Activated T-helper 1 cell treated with anti-CD3 and anti-CD28 coated beads, Interleukin-12 subunit alpha, Interleukin-12 subunit beta, Interleukin-2, Interleukin-4 antibody, amounts not matched to agents 30 ng/mL and 10 ng/mL and 1 ng/mL, durations not matched to agents 14 hours and 24 hours and 36 hours (primary cell): ENCODE measurements at regions of chr15 and their contacts with region 1.

Region 1: GRCh38 chr15:44711356-44712107 is at the start of gene B2M:
- DNase-seq: peak; percentile 95
- H3K4me3 Mint-ChIP-seq: peak within 1 kb of the TSS; percentile 99
- H3K27ac Mint-ChIP-seq: peak within 1 kb of the TSS; percentile 99
- H3K4me1 Mint-ChIP-seq: peaks cover 49% of the 10 kb centered on the region
- H3K27me3 Mint-ChIP-seq: no peaks in the 10 kb centered on the region
- total RNA-seq, gene B2M: 4,313 and 4,559 TPM in 2 replicates

Region 2: DNA sequence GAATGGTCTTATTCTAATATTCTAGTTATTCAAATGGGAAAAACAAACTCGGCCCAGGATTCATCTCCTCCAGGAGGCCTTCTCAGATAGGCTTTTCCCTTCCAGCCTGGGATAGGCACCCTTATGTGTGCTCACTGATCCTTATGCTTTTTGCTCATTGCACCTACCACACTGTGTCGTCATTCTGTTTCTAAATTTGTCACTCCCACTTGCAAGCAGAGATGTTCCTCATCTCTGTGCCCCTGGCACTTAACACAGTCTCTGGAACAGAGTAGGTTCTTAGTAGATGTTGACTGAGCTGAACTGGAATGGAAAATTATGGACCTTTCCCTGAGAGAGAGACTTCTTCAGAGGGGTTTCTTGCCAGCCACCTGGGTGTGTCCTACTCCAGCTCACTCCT is 29.3 kb before region 1 on chr15:
- intact Hi-C with region 1: loop called (anchors 1 kb)
- DNase-seq: no peak
- H3K4me3 Mint-ChIP-seq: peak overlapping the region; percentile 64
- H3K27ac Mint-ChIP-seq: peak overlapping the region; percentile 89
- H3K4me1 Mint-ChIP-seq: peaks cover 68% of the 10 kb centered on the region
- H3K27me3 Mint-ChIP-seq: no peaks in the 10 kb centered on the region

Region 3: DNA sequence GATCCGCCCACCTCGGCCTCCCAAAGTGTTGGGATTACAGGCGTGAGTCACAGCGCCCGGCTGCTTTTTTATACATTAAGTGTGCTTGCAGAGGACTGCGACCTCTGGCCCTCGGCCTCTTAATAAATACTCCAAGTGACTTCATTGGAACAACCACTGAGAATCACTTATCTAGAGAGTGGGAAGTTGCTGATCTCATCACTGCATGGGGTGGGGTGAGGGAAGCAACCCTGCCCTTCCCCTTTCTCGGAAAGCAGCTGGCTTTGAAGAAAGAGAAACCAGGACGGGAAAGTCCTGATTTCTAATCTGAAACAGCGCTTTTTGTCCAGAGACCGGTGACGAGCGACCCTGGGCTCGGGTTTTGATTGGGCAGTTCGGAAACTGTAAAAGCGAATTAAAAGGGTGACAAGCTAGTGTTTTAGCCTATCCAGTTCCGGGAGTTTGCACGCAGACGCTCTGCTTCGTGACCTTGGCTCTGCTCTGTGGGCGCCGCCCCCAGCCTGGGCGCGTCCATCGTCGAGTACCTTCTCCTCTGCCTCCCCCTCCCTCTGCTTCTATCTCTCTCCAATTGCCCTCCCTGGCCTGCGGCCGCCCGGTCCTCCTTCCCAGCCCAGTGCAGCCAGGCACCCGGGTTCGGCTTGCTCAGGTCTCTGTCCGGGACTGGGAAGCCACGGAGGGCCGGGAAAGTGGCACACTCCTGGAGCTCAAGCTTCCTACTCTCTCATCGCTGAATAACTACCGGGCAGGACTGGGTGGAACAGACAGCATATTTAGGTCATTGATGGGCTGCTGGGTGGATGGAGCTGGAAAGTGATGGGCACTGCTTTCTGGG is 17.3 kb after region 1 on chr15:
- intact Hi-C with region 1: loop called (anchors 1 kb)
- DNase-seq: peak; percentile 96
- H3K4me3 Mint-ChIP-seq: peak overlapping the region; percentile 100
- H3K27ac Mint-ChIP-seq: peak overlapping the region; percentile 99
- H3K4me1 Mint-ChIP-seq: peaks cover 77% of the 10 kb centered on the region
- H3K27me3 Mint-ChIP-seq: no peaks in the 10 kb centered on the region

Region 4: DNA sequence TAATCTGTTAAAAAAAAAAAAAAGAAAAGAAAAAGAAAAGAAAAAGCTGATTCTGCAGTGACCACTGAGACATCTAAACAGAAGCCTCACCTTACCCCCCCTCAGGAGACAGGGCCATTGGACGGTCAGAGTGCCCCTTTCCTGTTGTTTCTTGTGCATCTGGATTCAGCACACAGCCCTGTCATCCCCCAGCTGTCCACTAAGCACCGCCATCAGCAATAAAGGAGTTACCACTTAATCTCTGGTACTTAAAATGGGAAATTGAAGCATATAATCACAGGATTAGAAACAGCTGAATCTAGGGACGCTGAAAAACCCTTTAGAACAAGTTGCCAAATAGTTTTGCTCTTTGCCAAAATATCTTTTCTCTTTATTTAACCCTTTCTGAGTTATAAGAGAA is 87.3 kb after region 1 on chr15:
- intact Hi-C with region 1: no loop called
- DNase-seq: no peak
- H3K4me3 Mint-ChIP-seq: no peak overlapping the region
- H3K27ac Mint-ChIP-seq: no peak overlapping the region
- H3K4me1 Mint-ChIP-seq: peaks cover 13% of the 10 kb centered on the region
- H3K27me3 Mint-ChIP-seq: no peaks in the 10 kb centered on the region